ENCODE measurements at regions of chr12 and their contacts with region 1.

Region 1: GRCh38 chr12:88993651-88994050 is 358.6 kb downstream of the DUSP6 start:
- DNase-seq: no peak
- ATAC-seq: peak; percentile 40 to 83 (median 79)
- H3K4me3 ChIP-seq: no peak overlapping the region
- H3K27ac ChIP-seq: no peak overlapping the region
- H3K4me1 ChIP-seq: no peaks in the 10 kb centered on the region
- H3K27me3 ChIP-seq: no peaks in the 10 kb centered on the region
- CTCF ChIP-seq: peak in 3 of 4 donors; percentile 28 to 61 (median 60)

Region 2: DNA sequence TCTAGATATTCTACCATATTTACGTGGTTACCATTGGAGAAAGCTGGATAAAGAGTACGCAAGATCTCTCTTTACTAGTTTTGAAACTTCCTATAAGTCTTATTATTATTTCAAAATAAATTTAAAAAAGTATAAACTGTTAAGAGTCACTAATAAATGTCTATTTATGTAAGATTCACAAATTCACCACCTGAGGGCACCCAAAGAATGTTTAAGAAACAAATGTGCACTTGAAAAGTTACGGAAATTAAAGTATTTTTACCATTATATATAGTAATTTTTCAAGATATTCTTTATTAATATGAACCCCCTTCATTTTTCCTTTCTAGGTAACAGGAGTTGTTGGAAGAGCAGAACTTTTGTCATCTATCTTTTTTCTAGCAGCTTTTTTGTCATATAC is 839.7 kb before region 1 on chr12:
- intact Hi-C with region 1: loop called in 1 of 3 experiments (anchors 10 kb)
- DNase-seq: no peak
- ATAC-seq: no peak
- H3K4me3 ChIP-seq: no peak overlapping the region
- H3K27ac ChIP-seq: no peak overlapping the region
- H3K4me1 ChIP-seq: no peaks in the 10 kb centered on the region
- H3K27me3 ChIP-seq: no peaks in the 10 kb centered on the region
- CTCF ChIP-seq: no peak

Region 3: GRCh38 chr12:89671469-89671868 is 677.8 kb after region 1 on chr12:
- intact Hi-C with region 1: no loop called
- DNase-seq: no peak
- ATAC-seq: no peak
- H3K4me3 ChIP-seq: no peak overlapping the region
- H3K27ac ChIP-seq: no peak overlapping the region
- H3K4me1 ChIP-seq: peaks cover 0 to 4% (median 0%) of the 10 kb centered on the region in 3 donors
- H3K27me3 ChIP-seq: no peaks in the 10 kb centered on the region
- CTCF ChIP-seq: no peak